GM12878 (cell line): ENCODE measurements at regions of chr2 and their contacts with region 1.

Region 1: GRCh38 chr2:74587664-74588277 is 33.3 kb downstream of the DOK1 start:
- DNase-seq: no peak
- ATAC-seq: peak; percentile 86
- H3K4me3 ChIP-seq: no peak overlapping the region
- H3K27ac ChIP-seq: no peak overlapping the region
- H3K4me1 ChIP-seq: peaks cover 29% of the 10 kb centered on the region
- H3K27me3 ChIP-seq: no peaks in the 10 kb centered on the region
- CTCF ChIP-seq: peak; percentile 68 to 90 (median 86); a peak in 5 of 6 replicates
- EP300 ChIP-seq: no peak
- POLR2A ChIP-seq: no peak
- RAD21 ChIP-seq: peak; percentile 96

Region 2: DNA sequence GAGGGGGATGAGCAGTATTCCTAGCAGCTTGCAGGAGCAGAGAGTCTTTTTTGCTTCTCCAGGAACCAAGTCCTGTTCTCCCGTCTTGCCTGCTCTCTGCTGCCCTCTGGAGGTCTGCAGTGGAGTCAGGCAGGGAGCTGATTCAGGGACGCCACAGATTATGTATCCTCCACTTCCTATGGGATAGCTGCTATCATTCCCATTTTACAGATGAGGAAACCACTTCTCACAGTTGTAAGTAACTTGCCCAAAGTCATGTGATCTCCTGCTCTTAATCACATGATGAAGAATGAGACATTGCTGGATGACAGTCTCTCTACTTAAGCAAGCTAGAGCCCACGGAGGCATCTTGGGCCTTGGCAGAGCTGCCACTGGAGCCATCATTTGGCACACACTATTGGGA is 252.8 kb before region 1 on chr2:
- CTCF ChIA-PET with region 1: interaction called, 52 read pairs
- POLR2A ChIA-PET with region 1: no interaction called
- RAD21 ChIA-PET with region 1: interaction called, 5 read pairs
- SMC1A ChIA-PET with region 1: interaction called, 9 read pairs
- in situ Hi-C with region 1: no loop called
- intact Hi-C with region 1: loop called (anchors 10 kb)
- DNase-seq: peak; percentile 17
- ATAC-seq: peak; percentile 95
- H3K4me3 ChIP-seq: no peak overlapping the region
- H3K27ac ChIP-seq: no peak overlapping the region
- H3K4me1 ChIP-seq: no peaks in the 10 kb centered on the region
- H3K27me3 ChIP-seq: no peaks in the 10 kb centered on the region
- CTCF ChIP-seq: peak; percentile 88 to 97 (median 89)
- EP300 ChIP-seq: no peak
- POLR2A ChIP-seq: no peak
- RAD21 ChIP-seq: peak; percentile 90

Region 3: DNA sequence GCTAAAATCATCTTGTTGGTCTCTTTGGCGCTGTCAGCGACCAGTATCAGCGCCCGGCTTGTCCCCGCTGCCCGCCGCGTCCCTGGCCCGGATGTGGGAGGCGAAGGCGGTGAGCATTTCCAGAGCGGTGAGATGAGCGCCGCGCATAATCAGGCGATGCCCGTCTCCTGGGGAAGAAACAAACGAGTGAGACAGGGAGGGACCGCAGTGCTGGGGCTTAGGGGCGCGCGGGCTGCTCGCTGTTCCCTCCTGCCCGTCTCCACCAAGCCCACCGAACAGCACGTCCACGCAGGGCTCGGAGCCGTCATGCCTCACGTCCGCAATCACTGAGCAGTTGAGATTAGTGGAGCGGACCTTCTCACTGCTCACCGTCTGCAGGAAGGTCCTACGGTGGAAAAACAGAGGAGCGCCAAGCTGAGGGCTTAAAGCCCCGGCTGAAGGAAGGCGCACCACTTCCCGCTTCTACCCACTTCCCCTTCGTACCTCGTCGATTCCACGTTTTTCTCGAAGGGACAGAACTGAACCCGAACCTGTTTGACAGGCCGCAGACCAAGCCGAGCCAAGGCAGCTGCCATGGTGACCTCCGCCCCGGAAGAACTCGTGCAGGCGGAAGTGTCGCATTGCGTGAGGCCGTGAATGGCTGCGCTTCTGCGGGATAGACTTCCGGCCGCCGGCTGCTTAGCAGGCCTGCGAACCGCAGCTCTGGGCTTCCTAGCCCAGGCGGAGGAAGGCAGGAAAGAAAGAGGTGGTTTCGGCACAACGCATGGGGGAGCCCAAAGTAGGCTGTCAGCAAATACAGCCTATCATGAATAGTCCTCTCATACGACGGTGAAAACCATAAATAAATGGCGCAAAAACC is 115.5 kb before region 1 on chr2 and contains the start of gene MRPL53:
- CTCF ChIA-PET with region 1: interaction called, 13 read pairs
- POLR2A ChIA-PET with region 1: interaction called, 7 read pairs
- RAD21 ChIA-PET with region 1: interaction called, 3 read pairs
- SMC1A ChIA-PET with region 1: interaction called, 6 read pairs
- in situ Hi-C with region 1: no loop called
- intact Hi-C with region 1: no loop called
- DNase-seq: peak; percentile 86
- ATAC-seq: peak; percentile 94
- H3K4me3 ChIP-seq: peak within 1 kb of the TSS; percentile 89
- H3K27ac ChIP-seq: peak within 1 kb of the TSS; percentile 93
- H3K4me1 ChIP-seq: 0 out of 2 replicates have a peak, but pooled peaks cover 6% of the 10 kb centered on the region
- H3K27me3 ChIP-seq: no peaks in the 10 kb centered on the region
- CTCF ChIP-seq: no peak
- EP300 ChIP-seq: no peak
- POLR2A ChIP-seq: peak; percentile 98
- RAD21 ChIP-seq: no peak
- polyA plus RNA-seq, gene MRPL53: 40.8 to 94.1 TPM

Region 4: DNA sequence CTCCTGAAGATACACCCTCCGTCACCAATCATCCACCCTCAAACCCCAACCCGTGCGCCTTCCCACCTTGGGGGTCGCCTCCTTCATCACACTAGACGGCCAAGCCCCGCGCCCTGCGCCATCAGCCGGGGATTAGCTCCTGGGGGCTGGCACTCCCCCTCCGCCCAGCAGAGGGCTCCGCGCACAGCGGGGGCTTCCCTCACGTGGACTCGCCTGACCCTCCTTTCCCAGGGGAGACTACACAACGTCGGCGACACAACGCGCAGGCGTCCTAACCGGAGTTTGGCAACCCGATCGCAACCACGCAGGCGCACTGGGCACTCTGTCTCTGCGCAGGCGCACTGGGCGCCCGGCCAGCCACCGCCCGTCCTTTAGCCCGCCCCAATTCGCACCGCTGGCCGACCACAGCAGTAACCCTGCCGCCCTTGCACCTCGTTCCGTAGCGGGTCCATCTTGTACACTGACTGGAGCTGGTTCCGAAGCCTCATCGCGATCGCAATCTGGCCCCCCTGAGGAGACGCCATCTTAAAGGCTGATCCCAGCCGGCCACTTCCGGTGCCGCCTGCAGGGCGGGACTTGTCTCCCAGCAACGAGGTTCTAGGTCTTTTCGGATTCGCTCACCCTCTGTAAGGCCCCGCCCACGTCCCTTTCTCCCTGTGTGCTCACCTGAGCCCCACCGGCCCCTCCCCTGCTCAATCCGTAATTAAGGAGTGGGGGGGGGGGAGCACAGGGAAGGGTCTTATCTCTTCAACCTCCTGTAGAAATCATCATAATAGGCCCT is 80.4 kb before region 1 on chr2 and contains the start of gene PCGF1:
- CTCF ChIA-PET with region 1: interaction called, 231 read pairs
- POLR2A ChIA-PET with region 1: interaction called, 6 read pairs
- RAD21 ChIA-PET with region 1: interaction called, 61 read pairs
- SMC1A ChIA-PET with region 1: interaction called, 71 read pairs
- in situ Hi-C with region 1: no loop called
- intact Hi-C with region 1: loop called (anchors 1 kb)
- DNase-seq: peak; percentile 95
- ATAC-seq: peak; percentile 89
- H3K4me3 ChIP-seq: peak within 1 kb of the TSS; percentile 98
- H3K27ac ChIP-seq: peak within 1 kb of the TSS; percentile 97
- H3K4me1 ChIP-seq: peaks cover 27% of the 10 kb centered on the region
- H3K27me3 ChIP-seq: peaks cover 0 to under 1% of the 10 kb centered on the region in 2 experiments; a peak in 1 of 4 replicates
- CTCF ChIP-seq: peak; percentile 64 to 75 (median 71)
- EP300 ChIP-seq: no peak; a peak in 1 of 4 replicates
- POLR2A ChIP-seq: peak; percentile 94
- RAD21 ChIP-seq: peak; percentile 49
- polyA plus RNA-seq, gene PCGF1: 42.5 to 50.8 TPM

Region 5: GRCh38 chr2:74544634-74545033 is 43.1 kb before region 1 on chr2:
- CTCF ChIA-PET with region 1: interaction called, 115 read pairs
- POLR2A ChIA-PET with region 1: interaction called, 441 read pairs
- RAD21 ChIA-PET with region 1: interaction called, 96 read pairs
- SMC1A ChIA-PET with region 1: interaction called, 106 read pairs
- in situ Hi-C with region 1: no loop called
- intact Hi-C with region 1: no loop called
- DNase-seq: no peak
- ATAC-seq: no peak
- H3K4me3 ChIP-seq: no peak overlapping the region
- H3K27ac ChIP-seq: no peak overlapping the region
- H3K4me1 ChIP-seq: peaks cover 12% of the 10 kb centered on the region
- H3K27me3 ChIP-seq: no peaks in the 10 kb centered on the region
- CTCF ChIP-seq: peak; percentile 33 to 41 (median 39); a peak in 4 of 6 replicates
- EP300 ChIP-seq: no peak
- POLR2A ChIP-seq: no peak
- RAD21 ChIP-seq: peak; percentile 46; the same call in 1 of the 2 replicates

Region 6: GRCh38 chr2:74573747-74574562 is 13.8 kb before region 1 on chr2:
- CTCF ChIA-PET with region 1: interaction called, 281 read pairs
- POLR2A ChIA-PET with region 1: interaction called, 87 read pairs
- RAD21 ChIA-PET with region 1: interaction called, 152 read pairs
- SMC1A ChIA-PET with region 1: interaction called, 371 read pairs
- in situ Hi-C with region 1: no loop called
- intact Hi-C with region 1: no loop called
- DNase-seq: peak; percentile 59
- ATAC-seq: peak; percentile 54
- H3K4me3 ChIP-seq: peak overlapping the region; percentile 13; the same call in 1 of the 2 replicates
- H3K27ac ChIP-seq: peak overlapping the region; percentile 43
- H3K4me1 ChIP-seq: peaks cover 77% of the 10 kb centered on the region
- H3K27me3 ChIP-seq: no peaks in the 10 kb centered on the region
- CTCF ChIP-seq: no peak
- EP300 ChIP-seq: no peak; a peak in 1 of 4 replicates
- POLR2A ChIP-seq: no peak
- RAD21 ChIP-seq: no peak